Mucosa of descending colon (tissue), 3 donors: ENCODE measurements at regions of chr1 and their contacts with region 1.

Region 1: GRCh38 chr1:71093938-71094337 is 13.1 kb upstream of the ZRANB2 start:
- DNase-seq: no peak
- ATAC-seq: no peak
- H3K4me3 ChIP-seq: no peak overlapping the region
- H3K4me1 ChIP-seq: peaks cover 12% of the 10 kb centered on the region
- CTCF ChIP-seq: no peak

Region 2: GRCh38 chr1:71210718-71211117 is 116.8 kb after region 1 on chr1:
- intact Hi-C with region 1: no loop called
- DNase-seq: no peak
- ATAC-seq: no peak
- H3K4me3 ChIP-seq: no peak overlapping the region
- H3K4me1 ChIP-seq: no peaks in the 10 kb centered on the region
- CTCF ChIP-seq: no peak

Region 3: DNA sequence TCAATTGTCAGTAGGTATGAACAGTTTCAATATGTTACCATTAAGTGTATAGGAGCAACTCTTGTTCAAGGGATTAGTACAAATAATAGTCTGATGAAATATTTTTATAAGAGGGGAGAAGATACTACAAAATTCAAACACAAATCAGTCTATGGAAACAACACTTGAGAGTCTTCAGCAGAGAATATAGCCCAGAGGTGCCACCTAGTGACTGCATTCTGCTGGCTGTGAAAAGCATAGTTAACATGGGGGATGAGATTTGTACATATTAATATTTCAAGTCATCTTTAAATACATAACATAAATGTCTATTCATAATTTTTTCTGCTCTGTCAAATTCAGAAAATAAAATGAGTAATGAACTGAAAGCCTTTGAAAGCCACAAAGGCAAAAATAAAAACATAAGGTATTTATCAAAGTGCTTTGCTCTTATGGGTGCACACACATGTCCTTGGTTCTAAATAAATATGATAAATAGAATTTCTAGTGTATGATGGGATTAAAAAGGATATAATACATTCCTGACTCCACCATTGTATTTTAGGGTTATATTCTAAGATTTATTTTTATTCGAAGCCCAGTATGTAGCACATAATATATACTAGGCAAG is 427.8 kb after region 1 on chr1:
- intact Hi-C with region 1: loop called in 1 of 2 experiments (anchors 10 kb)
- DNase-seq: peak in 2 of 3 donors; percentile 38 to 88
- ATAC-seq: peak; percentile 76
- H3K4me3 ChIP-seq: no peak overlapping the region
- H3K4me1 ChIP-seq: peaks cover 4% of the 10 kb centered on the region
- CTCF ChIP-seq: no peak